ENCODE measurements at regions of chr1 and their contacts with region 1.

Region 1: GRCh38 chr1:101178688-101179491 is 57.9 kb upstream of the S1PR1 start:
- DNase-seq: peak; percentile 65
- ATAC-seq: peak; percentile 69
- H3K4me3 Mint-ChIP-seq: peak overlapping the region; percentile 71
- H3K27ac Mint-ChIP-seq: peak overlapping the region; percentile 99
- H3K4me1 Mint-ChIP-seq: peaks cover 87% of the 10 kb centered on the region
- H3K27me3 Mint-ChIP-seq: no peaks in the 10 kb centered on the region

Region 2: DNA sequence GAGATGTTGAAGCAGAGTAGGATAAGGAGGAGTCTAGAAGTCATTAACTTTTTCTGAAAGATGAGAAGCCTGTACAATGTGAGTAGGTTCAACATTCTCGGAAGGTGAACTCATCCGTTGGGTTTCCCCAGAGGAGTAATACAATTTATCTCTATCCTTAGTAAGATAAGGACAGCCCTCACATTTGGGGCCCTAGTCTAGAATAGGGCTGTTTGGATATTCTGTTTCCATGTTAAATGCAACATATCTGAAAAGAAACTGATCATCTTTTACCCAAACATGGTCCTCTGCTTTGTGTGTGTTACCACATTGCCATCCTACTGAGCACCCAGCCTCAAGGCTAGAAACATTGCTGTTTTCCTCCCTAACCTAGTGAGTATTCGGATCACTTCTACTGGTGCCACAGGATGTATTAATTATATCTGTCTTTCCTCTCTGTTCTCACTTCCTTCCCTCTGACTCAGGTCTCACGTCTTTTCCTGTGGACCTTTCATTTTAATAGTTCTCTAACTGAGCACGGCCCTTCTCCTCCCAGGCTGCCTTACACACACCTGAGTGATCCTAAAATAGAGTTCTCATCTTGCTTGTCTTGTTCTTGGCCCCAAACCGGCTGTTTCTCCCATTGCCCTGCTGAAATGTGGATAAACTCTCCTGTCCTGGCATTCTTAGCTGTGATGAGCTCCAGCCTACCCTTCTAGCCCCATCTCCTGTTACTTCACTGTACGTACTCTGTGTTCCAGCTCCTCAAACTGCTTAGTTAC is 734.9 kb before region 1 on chr1:
- CTCF ChIA-PET with region 1: no interaction called
- POLR2A ChIA-PET with region 1: no interaction called
- intact Hi-C with region 1: loop called (anchors 5 to 10 kb)
- DNase-seq: peak; percentile 49
- ATAC-seq: peak; percentile 79
- H3K4me3 Mint-ChIP-seq: peak overlapping the region; percentile 68
- H3K27ac Mint-ChIP-seq: peak overlapping the region; percentile 93
- H3K4me1 Mint-ChIP-seq: peaks cover 84% of the 10 kb centered on the region
- H3K27me3 Mint-ChIP-seq: no peaks in the 10 kb centered on the region

Region 3: GRCh38 chr1:100921109-100921706 is 257.7 kb before region 1 on chr1:
- CTCF ChIA-PET with region 1: interaction called, 3 read pairs
- POLR2A ChIA-PET with region 1: no interaction called
- intact Hi-C with region 1: loop called (anchors 2 to 5 kb)
- DNase-seq: no peak
- ATAC-seq: no peak
- H3K4me3 Mint-ChIP-seq: no peak overlapping the region
- H3K27ac Mint-ChIP-seq: peak overlapping the region; percentile 70
- H3K4me1 Mint-ChIP-seq: peaks cover 43% of the 10 kb centered on the region
- H3K27me3 Mint-ChIP-seq: no peaks in the 10 kb centered on the region

Region 4: GRCh38 chr1:101037316-101037715 is 141.6 kb before region 1 on chr1:
- CTCF ChIA-PET with region 1: no interaction called
- POLR2A ChIA-PET with region 1: interaction called, 11 read pairs
- intact Hi-C with region 1: no loop called
- DNase-seq: no peak
- ATAC-seq: no peak
- H3K4me3 Mint-ChIP-seq: no peak overlapping the region
- H3K27ac Mint-ChIP-seq: no peak overlapping the region
- H3K4me1 Mint-ChIP-seq: peaks cover 28% of the 10 kb centered on the region
- H3K27me3 Mint-ChIP-seq: no peaks in the 10 kb centered on the region

Region 5: DNA sequence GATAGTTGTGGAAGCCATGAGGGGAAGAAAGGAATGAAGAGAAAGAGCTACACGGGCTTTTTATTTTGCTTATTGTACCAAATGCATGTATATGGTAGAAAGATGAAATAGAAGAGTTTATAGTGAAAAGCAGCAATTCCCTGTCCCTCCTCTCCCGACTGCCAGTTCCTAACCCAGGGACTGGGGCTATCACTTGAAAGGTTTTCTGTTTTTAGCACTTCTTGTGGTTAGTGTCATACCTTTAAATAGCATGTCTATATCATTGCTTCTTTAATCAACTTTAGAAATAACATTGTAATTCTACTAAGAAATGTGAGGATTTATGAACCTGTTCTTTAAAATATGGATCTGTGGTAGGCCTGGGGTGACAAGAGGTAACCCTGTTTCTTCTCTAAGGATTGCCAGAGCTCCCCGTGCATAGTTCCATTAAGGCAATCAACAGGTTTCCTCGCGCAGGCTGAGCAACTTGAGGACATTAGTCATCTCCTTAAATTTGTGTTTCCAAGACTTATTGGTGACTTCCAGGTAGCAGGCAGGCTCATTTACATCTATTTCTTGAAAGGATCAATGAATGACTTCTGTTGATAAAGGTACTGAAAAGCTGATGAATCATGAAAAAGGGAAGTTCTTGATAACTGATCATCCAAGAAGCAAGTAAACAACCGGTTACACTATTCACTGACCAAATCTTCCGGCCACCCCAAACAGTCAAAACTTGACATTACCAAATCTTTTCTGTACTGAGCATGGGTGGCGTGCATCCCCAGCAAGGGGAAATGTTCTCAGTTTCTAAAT is 20.1 kb after region 1 on chr1:
- CTCF ChIA-PET with region 1: interaction called, 19 read pairs
- POLR2A ChIA-PET with region 1: interaction called, 36 read pairs
- intact Hi-C with region 1: loop called (anchors 1 kb)
- DNase-seq: peak; percentile 79
- ATAC-seq: peak; percentile 86
- H3K4me3 Mint-ChIP-seq: no peak overlapping the region
- H3K27ac Mint-ChIP-seq: peak overlapping the region; percentile 85
- H3K4me1 Mint-ChIP-seq: peaks cover 35% of the 10 kb centered on the region
- H3K27me3 Mint-ChIP-seq: no peaks in the 10 kb centered on the region

Region 6: DNA sequence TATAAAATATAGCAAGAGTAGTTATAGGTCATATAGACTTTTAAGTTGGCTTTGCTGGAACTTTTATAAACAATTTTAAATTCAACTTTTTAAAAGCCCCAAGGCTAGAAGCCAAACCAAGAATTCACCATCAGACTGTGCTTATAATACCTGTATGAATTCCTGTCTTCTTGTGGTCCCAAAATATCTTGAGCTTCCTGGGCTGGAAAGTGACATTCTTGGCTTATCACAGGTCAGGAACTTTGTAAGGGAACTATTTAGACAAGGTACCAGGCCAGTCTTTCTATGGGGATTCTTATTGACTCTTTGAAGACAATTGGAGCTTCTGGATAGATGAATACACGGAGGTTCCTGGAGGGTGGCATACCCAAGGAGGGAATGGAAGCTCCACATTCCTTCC is 33.5 kb after region 1 on chr1:
- CTCF ChIA-PET with region 1: no interaction called
- POLR2A ChIA-PET with region 1: no interaction called
- intact Hi-C with region 1: no loop called
- DNase-seq: no peak
- ATAC-seq: no peak
- H3K4me3 Mint-ChIP-seq: no peak overlapping the region
- H3K27ac Mint-ChIP-seq: no peak overlapping the region
- H3K4me1 Mint-ChIP-seq: peaks cover 14% of the 10 kb centered on the region
- H3K27me3 Mint-ChIP-seq: no peaks in the 10 kb centered on the region

Region 7: DNA sequence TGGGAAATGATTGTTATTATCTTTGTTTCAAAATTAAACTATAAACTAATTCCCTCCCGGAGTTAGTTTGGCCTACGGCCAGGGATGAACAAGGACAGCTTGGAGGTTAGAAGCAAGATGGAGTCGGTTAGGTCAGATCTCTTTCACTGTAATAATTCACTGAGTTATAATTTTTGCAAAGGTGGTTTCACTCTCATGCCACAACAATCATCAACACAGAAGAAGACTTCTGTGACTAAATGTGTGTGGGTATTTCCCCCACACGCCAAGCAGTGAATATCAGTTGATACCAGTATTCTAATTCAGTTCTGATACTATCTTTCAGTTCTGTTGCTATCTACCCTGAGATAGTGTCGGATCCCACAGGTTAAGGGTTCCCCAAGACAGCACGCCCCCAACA is 273.0 kb after region 1 on chr1:
- CTCF ChIA-PET with region 1: no interaction called
- POLR2A ChIA-PET with region 1: no interaction called
- intact Hi-C with region 1: loop called in 1 of 2 experiments (anchors 5 kb)
- DNase-seq: peak; percentile 49
- ATAC-seq: peak; percentile 94
- H3K4me3 Mint-ChIP-seq: no peak overlapping the region
- H3K27ac Mint-ChIP-seq: peak overlapping the region; percentile 21
- H3K4me1 Mint-ChIP-seq: peaks cover 39% of the 10 kb centered on the region
- H3K27me3 Mint-ChIP-seq: peaks cover 13% of the 10 kb centered on the region